ENCODE measurements at regions of chr4 and their contacts with region 1.

Region 1: DNA sequence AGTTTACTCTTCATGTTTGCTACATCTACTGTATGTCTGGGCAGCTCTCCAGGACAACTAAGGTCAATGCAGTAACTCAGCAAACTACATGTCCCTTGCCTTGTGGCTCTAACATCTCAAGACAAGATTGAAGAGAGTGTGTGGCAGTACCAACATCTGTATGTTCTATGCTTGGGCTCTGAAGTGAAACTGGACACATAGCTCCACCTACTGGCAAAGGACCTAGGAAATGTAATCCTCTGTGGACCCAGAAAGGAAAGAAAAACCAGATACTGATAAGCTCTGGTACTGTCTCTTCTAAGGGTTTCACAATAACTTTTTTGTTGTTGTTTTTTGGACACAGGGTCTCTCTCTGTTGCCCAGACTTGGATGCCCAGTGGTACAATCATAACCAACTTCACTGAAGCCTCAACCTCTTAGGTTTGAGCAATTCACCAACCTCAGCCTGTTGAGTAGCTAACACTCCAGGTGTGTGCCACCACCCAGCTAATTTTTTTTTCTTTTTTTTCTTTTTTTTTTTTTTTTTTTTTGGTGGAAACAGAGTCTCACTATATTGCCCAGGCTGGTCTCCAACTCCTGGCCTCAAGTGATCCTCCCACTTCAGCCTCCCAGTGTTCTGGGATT is 64.1 kb downstream of the QDPR start:
- DNase-seq: no peak
- H3K4me3 ChIP-seq: no peak overlapping the region
- H3K27ac ChIP-seq: peak overlapping the region; percentile 68 to 71
- H3K4me1 ChIP-seq: peaks cover 0 to 8% of the 10 kb centered on the region in 2 donors
- H3K27me3 ChIP-seq: no peaks in the 10 kb centered on the region
- CTCF ChIP-seq: peak; percentile 35 to 59 (median 55)

Region 2: DNA sequence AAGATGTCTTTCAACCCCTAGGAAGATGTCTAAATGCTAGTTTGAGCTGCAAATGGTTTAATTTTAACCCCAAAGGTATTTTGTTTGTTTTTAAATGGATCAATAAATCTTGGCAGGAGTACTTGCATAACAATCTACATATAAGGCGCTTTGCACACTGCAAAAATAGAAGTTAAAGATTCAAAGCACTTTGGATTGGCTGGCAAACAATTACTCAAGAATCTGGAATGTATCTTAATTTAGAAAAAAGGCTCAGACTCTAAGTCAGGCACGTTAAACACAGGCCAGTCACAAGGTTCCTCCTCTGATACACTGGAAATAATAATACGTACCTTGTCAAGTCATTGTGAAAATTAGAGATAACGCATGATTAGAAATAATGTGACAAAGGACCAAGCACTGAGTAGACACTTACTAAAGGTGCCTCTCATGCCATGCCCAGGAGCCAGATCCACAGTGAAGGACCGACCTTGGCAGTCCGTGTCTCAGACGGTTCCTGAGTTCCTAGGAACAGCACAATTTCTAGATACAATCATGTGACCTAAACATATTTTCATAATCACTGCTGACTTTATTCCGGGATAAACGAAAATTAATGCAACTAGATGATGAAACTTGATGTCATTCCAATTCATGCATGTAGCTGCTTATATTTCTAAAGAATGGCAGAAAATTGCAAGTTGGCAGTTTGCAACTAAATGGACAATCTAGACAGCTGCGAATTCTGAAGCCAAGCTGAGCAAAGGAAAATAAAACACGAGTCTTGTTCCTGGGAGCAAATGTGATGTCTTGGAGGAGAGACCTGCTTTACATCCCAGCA is 1413.6 kb before region 1 on chr4:
- intact Hi-C with region 1: loop called (anchors 5 kb)
- DNase-seq: no peak
- H3K4me3 ChIP-seq: peak overlapping the region in 1 of 2 donors; percentile 32
- H3K27ac ChIP-seq: peak overlapping the region; percentile 67 to 84
- H3K4me1 ChIP-seq: peaks cover 0 to 6% of the 10 kb centered on the region in 2 donors
- H3K27me3 ChIP-seq: no peaks in the 10 kb centered on the region
- CTCF ChIP-seq: no peak

Region 3: GRCh38 chr4:16289897-16290554 is 1157.8 kb before region 1 on chr4:
- intact Hi-C with region 1: loop called (anchors 10 kb)
- DNase-seq: no peak
- H3K4me3 ChIP-seq: no peak overlapping the region
- H3K27ac ChIP-seq: no peak overlapping the region
- H3K4me1 ChIP-seq: no peaks in the 10 kb centered on the region
- H3K27me3 ChIP-seq: no peaks in the 10 kb centered on the region
- CTCF ChIP-seq: peak in 2 of 3 experiments; percentile 47 to 63

Region 4: GRCh38 chr4:16916719-16917337 is 531.0 kb before region 1 on chr4:
- intact Hi-C with region 1: loop called (anchors 10 kb)
- DNase-seq: no peak
- H3K4me3 ChIP-seq: no peak overlapping the region
- H3K27ac ChIP-seq: no peak overlapping the region
- H3K4me1 ChIP-seq: no peaks in the 10 kb centered on the region
- H3K27me3 ChIP-seq: no peaks in the 10 kb centered on the region
- CTCF ChIP-seq: peak; percentile 27 to 57 (median 32)

Region 5: DNA sequence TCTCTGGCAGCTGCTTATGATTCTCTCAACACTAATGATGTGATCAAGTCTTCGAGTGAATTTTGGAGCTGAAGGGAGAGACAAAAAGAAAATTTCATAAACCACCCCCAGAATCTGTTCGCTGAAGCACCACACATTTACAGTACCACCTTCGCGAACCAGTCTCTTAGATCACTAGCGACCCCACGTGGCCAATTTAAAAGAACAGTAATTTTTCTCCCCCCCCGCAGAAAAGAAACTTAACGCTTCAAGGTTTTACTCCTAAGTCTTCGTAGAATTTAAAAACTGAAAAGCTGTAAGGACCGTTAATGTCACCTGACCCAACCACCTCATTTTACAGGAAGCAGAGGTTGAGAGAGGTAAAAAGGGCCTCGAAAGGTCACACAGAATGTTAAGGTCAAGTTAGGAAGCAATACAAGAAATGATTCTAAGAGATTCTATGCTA is 123.4 kb before region 1 on chr4:
- intact Hi-C with region 1: loop called (anchors 10 kb)
- DNase-seq: no peak
- H3K4me3 ChIP-seq: no peak overlapping the region
- H3K27ac ChIP-seq: no peak overlapping the region
- H3K4me1 ChIP-seq: peaks cover 0 to 7% of the 10 kb centered on the region in 2 donors
- H3K27me3 ChIP-seq: no peaks in the 10 kb centered on the region
- CTCF ChIP-seq: peak; percentile 50 to 80 (median 58)

Region 6: GRCh38 chr4:17347445-17347844 is 100.3 kb before region 1 on chr4:
- intact Hi-C with region 1: loop called (anchors 2 kb)
- DNase-seq: no peak
- H3K4me3 ChIP-seq: no peak overlapping the region
- H3K27ac ChIP-seq: no peak overlapping the region
- H3K4me1 ChIP-seq: no peaks in the 10 kb centered on the region
- H3K27me3 ChIP-seq: no peaks in the 10 kb centered on the region
- CTCF ChIP-seq: peak in 2 of 3 experiments; percentile 7 to 46